ENCODE measurements at regions of chr11 and their contacts with region 1.

Region 1: GRCh38 chr11:56783448-56784041 is 35.0 kb upstream of the OR9G4 start:
- DNase-seq: peak; percentile 11
- ATAC-seq: no peak
- H3K4me3 ChIP-seq: no peak overlapping the region
- H3K4me3 Mint-ChIP-seq: no peak overlapping the region
- H3K27ac ChIP-seq: no peak overlapping the region
- H3K27ac Mint-ChIP-seq: no peak overlapping the region
- H3K4me1 ChIP-seq: no peaks in the 10 kb centered on the region
- H3K4me1 Mint-ChIP-seq: peaks cover 5% of the 10 kb centered on the region
- H3K27me3 ChIP-seq: no peaks in the 10 kb centered on the region
- H3K27me3 Mint-ChIP-seq: no peaks in the 10 kb centered on the region
- CTCF ChIP-seq: peak; percentile 77

Region 2: DNA sequence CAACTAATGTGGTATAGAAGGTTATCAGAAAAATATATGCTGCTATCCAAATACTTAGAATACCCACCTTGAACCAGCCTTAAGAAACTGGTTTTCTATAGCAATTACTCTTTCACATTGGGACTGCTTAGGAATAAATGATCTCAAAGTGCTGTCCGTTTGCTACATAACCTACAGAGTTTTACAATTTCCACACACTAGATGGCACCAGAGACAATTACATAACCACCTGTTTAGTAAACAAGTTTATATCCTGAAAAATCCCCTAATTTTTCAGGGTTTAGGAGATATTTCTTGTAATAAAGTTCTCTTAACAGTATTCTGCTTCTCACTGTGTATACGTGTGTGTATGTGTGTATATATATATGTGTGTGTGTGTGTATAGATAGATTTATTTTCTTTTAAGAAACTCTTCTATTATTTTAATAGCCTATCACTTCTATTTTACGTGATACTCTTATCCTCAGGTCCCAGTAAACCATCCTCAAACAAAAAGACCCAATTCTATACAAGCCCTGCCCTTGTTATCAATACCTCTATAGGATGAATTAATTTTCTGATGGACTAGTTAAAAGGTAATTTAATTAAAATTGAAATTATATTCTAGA is 840.7 kb before region 1 on chr11:
- CTCF ChIA-PET with region 1: no interaction called
- POLR2A ChIA-PET with region 1: no interaction called
- intact Hi-C with region 1: loop called (anchors 5 kb)
- DNase-seq: no peak
- ATAC-seq: no peak
- H3K4me3 ChIP-seq: no peak overlapping the region
- H3K4me3 Mint-ChIP-seq: no peak overlapping the region
- H3K27ac ChIP-seq: no peak overlapping the region
- H3K27ac Mint-ChIP-seq: no peak overlapping the region
- H3K4me1 ChIP-seq: no peaks in the 10 kb centered on the region
- H3K4me1 Mint-ChIP-seq: no peaks in the 10 kb centered on the region
- H3K27me3 ChIP-seq: no peaks in the 10 kb centered on the region
- H3K27me3 Mint-ChIP-seq: no peaks in the 10 kb centered on the region
- CTCF ChIP-seq: peak; percentile 14

Region 3: GRCh38 chr11:56688554-56689100 is 94.9 kb before region 1 on chr11:
- CTCF ChIA-PET with region 1: no interaction called
- POLR2A ChIA-PET with region 1: no interaction called
- intact Hi-C with region 1: no loop called
- DNase-seq: no peak
- ATAC-seq: no peak
- H3K4me3 ChIP-seq: no peak overlapping the region
- H3K4me3 Mint-ChIP-seq: no peak overlapping the region
- H3K27ac ChIP-seq: no peak overlapping the region
- H3K27ac Mint-ChIP-seq: no peak overlapping the region
- H3K4me1 ChIP-seq: no peaks in the 10 kb centered on the region
- H3K4me1 Mint-ChIP-seq: no peaks in the 10 kb centered on the region
- H3K27me3 ChIP-seq: no peaks in the 10 kb centered on the region
- H3K27me3 Mint-ChIP-seq: no peaks in the 10 kb centered on the region
- CTCF ChIP-seq: no peak

Measured in B cell (primary cell).